HAP-1 (cell line): ENCODE measurements at regions of chr1 and their contacts with region 1.

Region 1: DNA sequence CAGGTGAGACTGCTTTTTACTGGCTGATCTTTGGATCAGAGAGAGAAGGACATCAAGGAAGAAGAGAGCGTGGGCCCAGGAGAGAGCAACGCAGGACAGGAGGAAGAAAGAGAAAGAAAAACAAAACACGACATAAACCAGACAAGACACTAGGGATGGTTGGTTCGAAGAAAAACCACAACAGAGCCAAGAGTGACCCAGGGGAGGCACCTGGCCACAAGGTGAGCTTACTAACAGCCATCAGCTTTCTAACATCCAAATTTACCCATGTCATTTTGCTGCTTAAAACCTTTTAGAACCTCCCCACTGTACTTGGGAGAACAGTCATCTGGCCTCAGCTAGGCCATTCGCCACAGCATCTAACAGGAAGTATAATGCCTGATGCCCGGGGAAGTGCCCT is 57.8 kb downstream of the ARHGEF11 start:
- DNase-seq: no peak
- H3K4me3 ChIP-seq: no peak overlapping the region
- H3K4me1 ChIP-seq: no peaks in the 10 kb centered on the region
- H3K27me3 ChIP-seq: no peaks in the 10 kb centered on the region

Region 2: GRCh38 chr1:155688324-155689080 is 1299.2 kb before region 1 on chr1 and contains the start of gene YY1AP1:
- in situ Hi-C with region 1: no loop called
- DNase-seq: peak; percentile 76 to 94
- H3K4me3 ChIP-seq: peak within 1 kb of the TSS; percentile 99
- H3K4me1 ChIP-seq: peaks cover 8% of the 10 kb centered on the region; the same call in 1 of the 2 replicates
- H3K27me3 ChIP-seq: no peaks in the 10 kb centered on the region

Region 3: DNA sequence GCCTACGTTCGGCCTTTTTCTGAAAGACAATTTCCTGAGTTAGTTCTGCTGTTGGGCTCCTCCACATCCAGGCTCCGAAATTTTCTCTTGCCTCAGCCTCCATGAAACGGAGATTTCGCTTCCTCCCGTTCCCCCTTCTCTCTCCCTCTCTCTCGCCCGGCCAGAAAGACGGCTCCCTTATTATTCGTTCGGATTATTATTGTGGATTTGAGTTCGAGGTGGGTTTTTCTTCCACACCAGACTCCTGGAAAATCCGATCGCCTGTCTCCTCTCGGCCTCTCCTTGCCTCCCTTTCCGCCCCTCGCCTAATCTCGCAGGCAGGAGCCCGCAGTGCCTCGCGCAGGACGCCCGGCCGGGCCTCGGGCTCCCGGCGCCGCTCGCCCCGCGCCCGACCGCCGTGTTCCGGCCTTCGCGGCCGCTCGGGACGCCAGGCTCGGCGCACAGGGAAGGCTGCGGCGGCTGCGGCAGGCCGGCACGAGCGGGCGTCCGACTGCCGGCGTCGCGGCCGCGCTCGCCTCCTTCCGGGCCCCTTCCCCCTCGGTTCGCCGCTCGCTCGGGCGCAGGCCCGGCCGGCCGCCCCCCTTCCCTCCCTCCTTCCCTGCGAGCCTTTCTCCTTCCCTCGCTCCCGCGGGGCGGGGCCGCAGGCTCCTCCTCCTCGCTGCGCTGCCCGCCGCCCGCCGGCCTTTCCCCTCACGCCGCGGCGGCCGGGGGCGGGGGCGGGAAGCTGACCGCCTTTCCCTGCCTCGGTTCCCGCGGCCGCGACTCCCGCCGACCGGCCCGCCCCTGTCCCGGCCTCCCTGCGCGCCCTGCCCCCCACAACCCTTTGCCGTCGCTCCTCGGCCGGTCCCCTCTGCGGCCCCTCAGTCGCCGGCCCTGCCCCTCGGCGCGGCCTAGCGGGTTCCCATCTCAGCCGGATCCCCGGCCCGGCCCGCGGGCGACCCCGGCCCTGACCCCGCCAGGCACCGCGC is 57.8 kb after region 1 on chr1 and contains the start of gene ARHGEF11:
- in situ Hi-C with region 1: loop called (anchors 10 kb)
- DNase-seq: peak; percentile 89 to 94
- H3K4me3 ChIP-seq: peak within 1 kb of the TSS; percentile 58
- H3K4me1 ChIP-seq: peaks cover 22% of the 10 kb centered on the region
- H3K27me3 ChIP-seq: no peaks in the 10 kb centered on the region

Region 4: GRCh38 chr1:157073944-157074767 is 86.4 kb after region 1 on chr1:
- in situ Hi-C with region 1: no loop called
- DNase-seq: peak; percentile 45 to 84
- H3K4me3 ChIP-seq: no peak overlapping the region
- H3K4me1 ChIP-seq: no peaks in the 10 kb centered on the region
- H3K27me3 ChIP-seq: peaks cover 11% of the 10 kb centered on the region; the same call in 1 of the 2 replicates

Region 5: DNA sequence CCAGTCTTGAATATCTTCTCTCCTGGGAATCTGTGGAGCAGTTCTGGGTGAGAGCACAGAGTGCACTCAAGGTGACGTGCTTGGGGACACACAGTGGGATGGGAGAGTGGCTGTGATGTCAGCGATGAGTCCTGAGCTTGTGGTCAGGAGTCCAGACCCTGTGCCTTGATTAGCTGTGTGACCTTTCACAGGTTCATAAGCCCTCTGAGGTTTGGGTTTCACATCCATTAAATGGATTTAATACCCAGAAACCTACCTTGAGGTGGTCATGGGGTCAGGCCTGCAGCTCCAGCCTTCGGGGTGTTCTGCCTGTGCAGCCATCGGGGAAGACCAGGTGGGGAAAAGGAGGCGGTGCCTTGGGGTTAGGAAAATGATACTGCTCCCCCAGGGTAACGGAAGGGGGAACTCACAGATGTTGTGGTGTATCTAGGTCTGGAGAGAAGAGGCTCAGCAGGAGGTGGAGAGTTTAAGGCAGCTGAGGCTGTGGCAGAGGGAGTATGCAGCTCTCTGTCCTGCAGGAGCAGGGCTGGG is 188.9 kb after region 1 on chr1:
- in situ Hi-C with region 1: no loop called
- DNase-seq: no peak
- H3K4me3 ChIP-seq: no peak overlapping the region
- H3K4me1 ChIP-seq: no peaks in the 10 kb centered on the region
- H3K27me3 ChIP-seq: 0 out of 2 replicates have a peak, but pooled peaks cover 6% of the 10 kb centered on the region